Right ventricle myocardium inferior (tissue), 1 donor: ENCODE measurements at regions of chr20 and their contacts with region 1.

Region 1: GRCh38 chr20:33281550-33282146 is 1.4 kb upstream of the BPIFB1 start:
- DNase-seq: no peak
- ATAC-seq: no peak

Region 2: GRCh38 chr20:33229843-33230242 is 51.8 kb before region 1 on chr20:
- intact Hi-C with region 1: loop called (anchors 10 kb)
- DNase-seq: no peak
- ATAC-seq: no peak

Region 3: DNA sequence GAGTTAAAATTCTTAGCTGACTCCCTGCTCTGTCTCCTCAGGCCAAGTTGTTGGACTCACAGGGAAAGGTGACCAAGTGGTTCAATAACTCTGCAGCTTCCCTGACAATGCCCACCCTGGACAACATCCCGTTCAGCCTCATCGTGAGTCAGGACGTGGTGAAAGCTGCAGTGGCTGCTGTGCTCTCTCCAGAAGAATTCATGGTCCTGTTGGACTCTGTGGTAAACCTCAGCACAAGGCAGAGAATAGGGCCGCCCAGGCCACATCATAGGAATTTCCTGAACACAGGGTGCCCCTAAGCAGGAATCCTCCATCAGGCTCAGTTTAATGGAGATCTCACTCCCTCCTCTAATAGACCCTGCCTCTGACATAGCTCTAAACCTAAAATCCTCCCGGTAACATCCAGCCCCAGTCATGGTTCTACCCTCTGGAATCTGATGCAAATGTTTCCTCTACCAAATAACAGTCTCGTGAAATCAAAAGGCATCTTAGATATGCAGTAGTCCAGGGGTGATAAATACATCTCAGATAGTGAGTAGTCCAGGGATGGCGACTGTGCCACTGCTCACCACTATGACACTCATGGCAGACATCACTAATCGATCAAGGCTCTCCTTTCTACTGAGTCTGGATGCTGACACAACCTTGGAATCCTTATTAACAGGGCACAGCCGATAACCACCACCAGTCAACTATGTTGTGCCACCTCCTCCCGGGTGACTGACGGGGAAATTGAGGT is 19.7 kb after region 1 on chr20:
- intact Hi-C with region 1: no loop called
- DNase-seq: no peak
- ATAC-seq: no peak